Activated B cell treated with CpG ODN at 0.5 μM for 24 hours (primary cell): ENCODE measurements at regions of chr1 and their contacts with region 1.

Region 1: GRCh38 chr1:158830904-158831507 is at the start of gene MNDA:
- DNase-seq: no peak
- ATAC-seq: peak; percentile 92
- H3K4me3 Mint-ChIP-seq: peak within 1 kb of the TSS; percentile 82
- H3K27ac Mint-ChIP-seq: peak within 1 kb of the TSS; percentile 93
- H3K4me1 Mint-ChIP-seq: peaks cover 30% of the 10 kb centered on the region
- H3K27me3 Mint-ChIP-seq: no peaks in the 10 kb centered on the region
- CTCF ChIP-seq: no peak
- total RNA-seq, gene MNDA: 14.2 and 17.3 TPM in 2 replicates

Region 2: DNA sequence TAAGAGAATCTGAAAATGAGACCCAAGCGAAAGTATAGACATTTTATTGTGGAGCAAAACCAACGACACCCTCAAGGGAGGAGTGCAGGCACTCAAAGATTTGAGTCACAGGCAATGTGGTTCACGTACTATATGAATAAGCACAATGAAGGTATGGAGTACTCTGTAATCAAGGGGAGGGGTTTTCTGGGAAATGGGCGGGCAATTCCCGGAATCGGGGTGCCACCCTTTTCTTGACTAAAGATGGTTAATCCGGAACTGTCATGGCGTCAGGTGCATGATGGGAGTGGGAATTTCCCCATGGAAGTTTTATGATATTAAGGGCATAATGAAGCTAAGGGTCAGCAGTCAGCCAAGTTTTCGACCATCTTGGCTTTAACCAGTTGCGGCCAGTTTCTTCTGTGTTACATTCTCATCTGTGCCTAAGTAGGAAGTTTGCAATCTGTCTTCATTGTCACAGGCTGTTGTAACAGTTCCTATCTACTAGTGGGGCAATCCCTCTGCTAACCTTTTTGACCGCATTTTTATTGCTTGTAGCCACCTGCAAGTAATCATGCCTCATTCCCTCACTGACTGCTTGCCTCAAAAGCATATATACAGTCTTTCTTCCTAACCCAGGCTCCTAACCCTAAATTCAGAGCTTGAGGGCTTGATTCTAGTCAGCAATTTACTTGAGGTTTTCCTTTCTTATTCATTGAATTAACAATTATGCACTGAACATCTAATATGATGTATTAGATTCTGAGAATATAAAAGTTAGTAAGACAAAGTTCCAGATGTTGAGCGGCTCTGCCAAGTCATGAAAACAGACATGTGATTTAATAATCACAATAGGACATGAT is 246.3 kb after region 1 on chr1:
- CTCF ChIA-PET with region 1: no interaction called
- POLR2A ChIA-PET with region 1: interaction called, 3 read pairs
- intact Hi-C with region 1: loop called (anchors 2 kb)
- DNase-seq: peak; percentile 71
- ATAC-seq: peak; percentile 73
- H3K4me3 Mint-ChIP-seq: peak overlapping the region; percentile 89
- H3K27ac Mint-ChIP-seq: peak overlapping the region; percentile 94
- H3K4me1 Mint-ChIP-seq: peaks cover 40% of the 10 kb centered on the region
- H3K27me3 Mint-ChIP-seq: no peaks in the 10 kb centered on the region
- CTCF ChIP-seq: no peak